ENCODE measurements at regions of chr15 and their contacts with region 1.

Region 1: DNA sequence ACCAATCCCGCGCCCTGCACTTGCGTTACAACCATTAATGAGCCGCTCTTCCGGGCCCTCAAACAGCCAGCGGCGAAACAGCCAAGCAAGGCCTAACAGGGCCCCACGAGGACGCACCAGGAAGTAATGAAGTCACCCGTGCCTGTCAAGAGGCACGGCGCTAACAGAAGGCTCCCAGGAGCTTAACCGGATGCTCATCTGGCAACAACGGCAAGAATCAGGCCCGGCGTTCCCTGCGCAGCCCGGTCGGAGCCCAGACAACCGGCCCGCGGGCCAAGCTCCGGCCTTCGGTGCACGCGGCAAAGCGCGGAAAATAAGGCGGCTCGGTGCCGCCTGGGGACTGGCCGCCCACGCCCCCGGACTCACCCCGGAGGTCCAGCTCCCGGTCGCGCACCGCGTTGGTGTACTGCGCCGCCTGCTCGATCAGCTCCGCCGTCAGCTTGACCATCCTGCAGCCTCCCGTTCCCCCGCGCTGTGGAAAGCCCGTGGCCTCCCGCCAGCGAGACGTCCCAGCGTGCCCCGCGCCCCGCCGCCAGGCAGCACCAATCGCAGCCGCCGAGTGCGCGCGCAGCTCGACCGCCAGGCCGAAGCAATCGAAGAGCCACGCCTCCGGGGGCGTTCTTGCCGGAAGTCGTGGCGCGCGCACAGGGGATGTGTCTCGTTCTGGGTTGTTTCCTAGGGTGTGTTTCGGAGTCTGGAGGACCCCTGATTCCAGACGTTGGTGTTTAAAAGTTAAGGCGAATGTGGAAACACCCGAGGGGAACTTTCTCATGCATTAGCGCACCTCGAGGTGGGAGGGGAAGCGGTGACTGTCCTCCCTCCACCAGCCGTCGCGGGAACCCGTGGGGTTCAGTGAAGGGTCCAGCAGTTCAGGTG is at the start of gene SNRPA1:
- DNase-seq: peak; percentile 98 to 100
- ATAC-seq: peak; percentile 86
- total RNA-seq, gene SNRPA1: 44.7 to 48.2 TPM

Region 2: GRCh38 chr15:101242160-101242998 is 52.6 kb before region 1 on chr15:
- intact Hi-C with region 1: no loop called
- DNase-seq: no peak
- ATAC-seq: no peak

Region 3: GRCh38 chr15:101641166-101641764 is 346.3 kb after region 1 on chr15:
- intact Hi-C with region 1: loop called in 1 of 2 experiments (anchors 5 kb)
- DNase-seq: peak; percentile 49 to 86
- ATAC-seq: peak; percentile 69